Common myeloid progenitor, CD34-positive (primary cell): ENCODE measurements at regions of chr21 and their contacts with region 1.

Region 1: DNA sequence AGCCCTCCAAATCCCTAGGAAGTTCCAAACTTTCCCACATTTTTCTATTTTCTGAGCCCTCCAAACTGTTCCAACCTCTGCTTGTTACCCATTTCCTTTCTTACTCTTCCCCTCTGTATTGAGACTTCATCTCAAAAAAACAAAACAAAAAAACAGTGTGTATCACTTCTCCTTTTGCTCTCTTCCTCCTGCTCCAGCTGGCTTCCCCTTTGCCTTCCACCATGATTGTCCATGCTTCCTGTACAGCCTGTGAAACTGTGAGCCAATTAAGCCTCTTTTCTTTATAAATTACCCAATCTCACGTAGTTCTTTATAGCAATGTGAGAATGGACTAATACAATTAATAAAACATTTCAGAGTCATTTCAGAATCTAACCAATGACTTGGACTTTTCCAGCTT is 69.6 kb upstream of the KRTAP19-8 start:
- DNase-seq: peak in 2 of 3 donors; percentile 76
- H3K4me3 ChIP-seq: no peak overlapping the region
- H3K27ac ChIP-seq: no peak overlapping the region
- H3K4me1 ChIP-seq: peaks cover 2 to 23% (median 9%) of the 10 kb centered on the region in 4 experiments
- H3K27me3 ChIP-seq: no peaks in the 10 kb centered on the region

Region 2: GRCh38 chr21:31180256-31181081 is 72.6 kb after region 1 on chr21:
- CTCF ChIA-PET with region 1: interaction called, 94 read pairs
- POLR2A ChIA-PET with region 1: no interaction called
- DNase-seq: peak; percentile 56 to 72 (median 65)
- H3K4me3 ChIP-seq: no peak overlapping the region
- H3K27ac ChIP-seq: no peak overlapping the region
- H3K4me1 ChIP-seq: peaks cover 7 to 30% (median 26%) of the 10 kb centered on the region in 4 experiments
- H3K27me3 ChIP-seq: no peaks in the 10 kb centered on the region